A673 (cell line): ENCODE measurements at regions of chr1 and their contacts with region 1.

Region 1: DNA sequence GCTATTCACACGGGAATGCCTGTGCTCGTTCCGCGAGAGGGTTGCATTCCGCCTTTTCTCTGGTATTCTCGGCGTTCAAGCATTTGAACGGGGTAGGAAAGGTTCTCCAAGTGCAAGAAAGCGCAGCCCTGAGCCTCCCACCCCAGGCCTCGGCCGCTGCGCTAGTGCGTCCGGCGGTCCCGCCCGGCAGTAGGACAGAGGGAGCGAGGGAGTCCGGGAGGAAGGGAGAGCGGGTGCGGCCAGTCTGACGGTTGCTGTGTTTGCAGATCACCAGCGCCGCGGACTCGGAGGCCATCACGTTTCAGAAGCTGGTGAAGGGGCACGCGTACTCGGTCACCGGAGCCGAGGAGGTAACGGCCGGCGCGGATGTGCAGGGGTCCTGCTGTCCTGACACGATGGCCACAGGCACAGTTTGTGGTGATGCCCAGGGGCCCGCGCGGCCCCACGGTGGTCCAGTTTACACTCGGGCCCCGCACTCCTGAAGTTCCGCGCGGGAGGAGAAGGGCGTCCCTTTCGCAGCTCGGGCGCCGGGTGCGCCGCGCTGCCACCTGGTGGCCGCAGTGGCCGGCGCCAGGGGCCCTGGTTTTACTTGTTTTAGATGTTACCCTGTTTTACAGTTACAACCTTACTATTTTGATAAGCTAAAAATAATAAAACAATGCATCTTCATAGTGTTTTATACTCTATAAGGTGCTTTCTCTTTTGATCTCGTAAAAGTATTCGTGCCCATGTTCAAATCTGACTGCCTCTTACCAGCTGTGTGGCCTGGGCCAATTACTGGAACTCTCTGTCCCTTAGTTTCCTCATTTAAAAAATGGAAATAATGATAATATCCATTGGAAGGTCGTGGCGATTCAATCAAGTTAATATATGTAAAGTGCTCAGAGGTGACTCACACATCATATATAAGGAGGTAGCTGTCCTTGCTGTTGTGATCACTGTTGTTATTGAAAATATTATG is 36.7 kb downstream of the CAPN2 start:
- DNase-seq: peak; percentile 78
- H3K4me3 ChIP-seq: peak overlapping the region; percentile 46
- H3K27ac ChIP-seq: peak overlapping the region; percentile 46
- H3K4me1 ChIP-seq: peaks cover 22% of the 10 kb centered on the region
- H3K27me3 ChIP-seq: no peaks in the 10 kb centered on the region
- CTCF ChIP-seq: peak; percentile 98

Region 2: GRCh38 chr1:223628233-223629125 is 120.6 kb before region 1 on chr1:
- CTCF ChIA-PET with region 1: no interaction called
- POLR2A ChIA-PET with region 1: no interaction called
- intact Hi-C with region 1: no loop called
- DNase-seq: peak; percentile 78
- H3K4me3 ChIP-seq: no peak overlapping the region
- H3K27ac ChIP-seq: no peak overlapping the region
- H3K4me1 ChIP-seq: no peaks in the 10 kb centered on the region
- H3K27me3 ChIP-seq: peaks cover 11% of the 10 kb centered on the region
- CTCF ChIP-seq: peak; percentile 94

Region 3: GRCh38 chr1:223700942-223701637 is 48.0 kb before region 1 on chr1:
- CTCF ChIA-PET with region 1: interaction called, 18 read pairs
- POLR2A ChIA-PET with region 1: no interaction called
- intact Hi-C with region 1: loop called (anchors 1 kb)
- DNase-seq: peak; percentile 76
- H3K4me3 ChIP-seq: no peak overlapping the region
- H3K27ac ChIP-seq: peak overlapping the region; percentile 70
- H3K4me1 ChIP-seq: peaks cover 26% of the 10 kb centered on the region
- H3K27me3 ChIP-seq: no peaks in the 10 kb centered on the region
- CTCF ChIP-seq: no peak

Region 4: GRCh38 chr1:223712850-223713494 is 36.1 kb before region 1 on chr1:
- CTCF ChIA-PET with region 1: interaction called, 5 read pairs
- POLR2A ChIA-PET with region 1: no interaction called
- intact Hi-C with region 1: loop called (anchors 1 kb)
- DNase-seq: peak; percentile 53
- H3K4me3 ChIP-seq: peak overlapping the region; percentile 75
- H3K27ac ChIP-seq: peak overlapping the region; percentile 92
- H3K4me1 ChIP-seq: peaks cover 44% of the 10 kb centered on the region
- H3K27me3 ChIP-seq: no peaks in the 10 kb centered on the region
- CTCF ChIP-seq: no peak